ENCODE measurements at regions of chr1 and their contacts with region 1.

Region 1: DNA sequence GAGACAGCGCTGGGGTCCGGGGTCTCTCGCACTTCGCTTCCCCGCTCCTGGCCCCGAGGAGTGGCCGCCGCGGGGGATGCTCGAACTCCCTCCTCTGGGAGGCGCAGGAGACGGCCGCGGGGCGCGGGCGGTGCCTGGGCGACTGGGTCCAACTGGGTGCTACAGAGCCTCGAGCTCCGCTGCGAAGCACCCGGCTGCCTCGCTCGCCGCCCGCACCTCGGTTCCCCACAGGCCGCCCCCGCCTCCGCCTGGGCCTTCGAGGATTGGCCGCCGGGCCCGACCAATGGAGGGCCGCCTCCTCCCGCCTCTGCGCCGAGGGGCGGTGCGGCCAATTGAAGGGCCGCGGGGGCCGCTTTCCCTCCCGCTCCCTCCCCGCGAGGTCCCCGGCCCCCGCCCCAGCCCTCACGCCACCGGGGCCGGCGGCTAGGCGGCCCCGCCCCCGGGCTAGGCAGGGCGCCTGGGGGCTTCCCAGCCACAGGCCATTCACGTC is at the start of gene CNN3:
- DNase-seq: peak; percentile 82 to 98
- H3K4me3 ChIP-seq: peak within 1 kb of the TSS; percentile 73
- CTCF ChIP-seq: no peak
- POLR2A ChIP-seq: peak in 1 of 2 donors; percentile 78
- total RNA-seq, gene CNN3: 30.7 to 94.3 (median 47.8) TPM

Region 2: DNA sequence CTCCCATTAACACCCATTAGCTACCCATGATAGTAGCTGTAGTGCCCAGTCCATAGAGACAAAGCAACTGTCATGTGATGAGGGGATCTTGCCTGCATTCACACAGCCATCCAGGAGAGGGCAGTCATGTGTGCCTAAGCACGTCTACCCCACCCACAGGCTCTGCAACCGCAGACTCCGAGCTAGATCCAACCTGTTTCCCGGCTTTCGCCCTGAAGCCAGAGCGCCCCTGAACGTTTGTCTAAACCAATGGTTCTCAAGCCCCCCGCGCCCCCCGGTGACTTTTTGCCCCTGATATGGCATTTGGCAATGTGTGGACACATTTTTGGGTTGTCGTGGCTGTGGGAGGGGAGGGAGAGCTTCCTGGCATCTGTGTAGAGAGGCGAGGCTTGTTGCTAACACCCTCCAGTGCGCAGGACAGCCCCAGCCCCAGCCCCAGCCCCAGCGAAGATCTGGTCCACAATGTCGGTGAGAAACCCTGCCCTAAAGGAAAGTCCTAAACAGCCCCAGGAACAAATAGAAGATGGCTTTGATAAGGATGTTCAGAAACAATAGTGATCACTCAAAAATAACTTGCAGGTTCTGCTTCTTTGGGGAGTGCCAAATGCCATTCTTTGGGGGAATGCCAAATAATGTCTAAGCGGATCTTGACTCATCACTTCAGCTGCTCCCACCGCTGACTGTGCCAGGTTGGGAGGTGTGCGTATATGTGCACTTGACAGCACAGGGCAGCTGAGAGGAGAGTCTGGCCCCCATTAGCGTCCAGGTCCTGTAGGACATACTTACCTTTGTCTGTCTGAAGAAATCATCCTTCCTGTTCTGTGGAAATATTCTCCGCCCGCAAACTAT is 72.3 kb before region 1 on chr1:
- intact Hi-C with region 1: loop called (anchors 10 kb)
- DNase-seq: peak; percentile 90 to 96
- H3K4me3 ChIP-seq: no peak overlapping the region
- CTCF ChIP-seq: peak in 1 of 3 donors; percentile 95
- POLR2A ChIP-seq: no peak